Dorsolateral prefrontal cortex (tissue), 120 donors: ENCODE measurements at regions of chr9 and their contacts with region 1.

Region 1: DNA sequence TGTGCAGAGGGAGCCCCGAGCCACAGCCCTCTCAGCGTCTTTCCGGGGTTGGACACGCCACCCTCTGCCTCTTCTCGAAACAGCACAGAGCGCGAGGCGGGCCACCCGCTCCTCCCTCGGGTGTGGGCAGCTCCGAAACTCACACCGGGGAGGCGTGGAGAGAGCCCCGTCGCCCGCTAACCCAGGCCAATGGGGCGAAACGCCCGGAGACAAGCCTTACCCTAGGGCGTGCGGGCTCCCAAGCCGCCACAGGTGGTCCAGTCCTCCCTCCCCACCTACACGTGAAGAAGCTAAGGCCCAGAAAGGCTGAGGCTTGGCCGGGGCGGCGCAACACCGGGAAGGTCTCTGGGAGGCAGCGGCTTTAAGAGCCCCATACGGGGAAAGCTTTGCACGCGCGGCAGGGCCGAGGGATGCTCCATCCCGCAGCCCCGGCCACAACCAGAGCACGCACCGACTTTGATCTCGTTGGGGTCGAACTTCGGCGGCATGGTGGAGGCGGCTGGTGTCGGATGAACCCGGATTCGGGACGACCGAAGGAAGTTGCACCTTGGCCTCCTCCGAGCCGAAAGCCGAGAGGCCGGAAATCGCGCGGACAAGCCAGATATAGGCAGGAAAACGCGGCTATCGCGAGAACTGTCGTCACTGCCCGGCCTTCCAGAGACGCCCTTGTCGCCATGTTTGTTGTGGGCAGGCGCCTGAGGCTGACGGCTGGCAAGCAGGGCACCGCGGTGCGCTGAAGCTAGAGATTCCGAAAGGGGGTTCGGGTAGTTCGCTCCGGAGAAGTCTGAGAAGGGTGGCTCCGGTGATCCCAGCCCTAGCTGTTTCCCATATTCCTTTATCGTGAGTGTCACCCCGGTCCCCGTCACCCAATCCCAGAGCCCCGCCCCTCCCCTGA is at the starts of genes LRSAM1 and RPL12:
- DNase-seq: peak; percentile 95 to 97 (median 96)
- H3K4me3 ChIP-seq: peak within 1 kb of the TSS; percentile 66 to 99 (median 92)
- H3K27ac ChIP-seq: peak within 1 kb of the TSS; percentile 26 to 98 (median 89)
- H3K27me3 ChIP-seq: no peaks in the 10 kb centered on the region
- CTCF ChIP-seq: peak in 16 of 56 donors; percentile 7 to 43 (median 20)
- total RNA-seq, gene LRSAM1: 29.7 to 62.3 (median 40.4) TPM
- total RNA-seq, gene RPL12: 136 to 384 (median 236) TPM

Region 2: DNA sequence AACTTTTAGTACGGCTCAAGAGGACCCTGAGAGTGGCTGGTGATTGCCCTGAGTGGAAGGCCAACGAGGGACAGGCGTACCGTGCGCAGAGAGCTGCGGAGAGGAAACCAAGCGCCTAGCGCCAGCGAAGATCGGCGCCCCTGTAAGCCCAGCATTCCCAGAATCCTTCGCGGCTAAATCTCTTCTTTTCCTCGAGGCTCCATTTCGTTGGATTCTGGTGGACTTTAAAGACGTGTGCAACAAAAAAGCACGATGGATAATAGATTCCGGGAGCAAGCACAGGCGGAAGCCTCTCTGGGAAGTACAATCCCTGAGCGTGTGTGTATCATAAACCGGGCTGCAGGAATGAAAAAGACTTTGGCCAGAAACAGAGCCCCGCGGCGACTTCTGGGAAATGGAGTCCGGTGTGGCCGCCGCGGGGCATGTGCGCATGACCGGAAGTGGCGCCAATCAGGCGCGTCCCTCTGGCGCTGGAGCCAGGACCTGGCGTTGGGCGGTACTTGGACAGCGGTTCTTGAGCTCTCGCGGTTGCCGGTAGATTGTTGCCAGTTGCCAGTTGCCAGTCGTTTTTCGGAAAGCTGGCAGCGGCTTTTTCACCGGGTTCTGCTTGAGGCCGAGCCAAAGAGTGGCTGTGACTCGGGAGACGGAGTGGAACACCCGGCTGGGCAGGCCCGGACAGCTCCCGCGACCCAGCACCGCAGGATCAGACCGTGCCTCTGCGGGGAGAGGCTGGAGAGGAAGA is 27.0 kb before region 1 on chr9 and contains the start of gene ZNF79:
- intact Hi-C with region 1: loop called (anchors 1 kb)
- DNase-seq: peak; percentile 86 to 94 (median 90)
- H3K4me3 ChIP-seq: peak within 1 kb of the TSS; percentile 76 to 100 (median 94)
- H3K27ac ChIP-seq: peak within 1 kb of the TSS; percentile 79 to 100 (median 97)
- H3K27me3 ChIP-seq: no peaks in the 10 kb centered on the region
- CTCF ChIP-seq: peak in 26 of 56 donors; percentile 2 to 62 (median 24)
- total RNA-seq, gene ZNF79: 8.1 to 16.9 (median 10.9) TPM